ENCODE measurements at regions of chr2 and their contacts with region 1.

Region 1: GRCh38 chr2:54899576-54900200 is 150.6 kb downstream of the RTN4 start:
- DNase-seq: peak; percentile 67
- H3K4me3 ChIP-seq: no peak overlapping the region
- H3K27ac ChIP-seq: no peak overlapping the region
- H3K4me1 ChIP-seq: peaks cover 27% of the 10 kb centered on the region
- H3K27me3 ChIP-seq: no peaks in the 10 kb centered on the region
- CTCF ChIP-seq: peak; percentile 79

Region 2: GRCh38 chr2:54915101-54915500 is 15.4 kb after region 1 on chr2:
- CTCF ChIA-PET with region 1: no interaction called
- POLR2A ChIA-PET with region 1: no interaction called
- intact Hi-C with region 1: no loop called
- DNase-seq: no peak
- H3K4me3 ChIP-seq: no peak overlapping the region
- H3K27ac ChIP-seq: no peak overlapping the region
- H3K4me1 ChIP-seq: no peaks in the 10 kb centered on the region
- H3K27me3 ChIP-seq: no peaks in the 10 kb centered on the region
- CTCF ChIP-seq: no peak

Region 3: DNA sequence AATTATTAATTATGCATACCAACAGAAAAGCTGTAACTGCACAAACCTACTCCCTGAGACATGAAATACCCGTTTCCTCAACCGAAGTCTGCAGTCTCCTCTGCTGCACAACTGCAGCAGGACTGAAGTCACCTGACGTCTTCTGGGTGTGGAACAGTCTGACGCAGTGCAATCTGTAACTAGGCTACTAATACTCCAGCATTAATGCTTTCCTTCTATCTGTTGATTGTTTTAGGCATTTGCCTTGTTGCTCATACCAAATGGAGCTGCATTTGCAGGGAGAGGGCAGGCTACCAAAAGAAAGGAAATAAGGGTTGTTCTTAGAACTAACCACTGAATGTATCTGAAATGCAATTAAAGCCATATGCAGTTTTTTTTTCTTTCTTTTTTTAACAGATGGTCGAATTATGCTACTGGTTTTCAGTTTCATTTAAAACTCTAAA is 110.5 kb after region 1 on chr2:
- CTCF ChIA-PET with region 1: interaction called, 11 read pairs
- POLR2A ChIA-PET with region 1: no interaction called
- intact Hi-C with region 1: loop called (anchors 2 kb)
- DNase-seq: peak; percentile 79
- H3K4me3 ChIP-seq: peak overlapping the region; percentile 38
- H3K27ac ChIP-seq: peak overlapping the region; percentile 20
- H3K4me1 ChIP-seq: peaks cover 94% of the 10 kb centered on the region
- H3K27me3 ChIP-seq: no peaks in the 10 kb centered on the region
- CTCF ChIP-seq: no peak

Region 4: DNA sequence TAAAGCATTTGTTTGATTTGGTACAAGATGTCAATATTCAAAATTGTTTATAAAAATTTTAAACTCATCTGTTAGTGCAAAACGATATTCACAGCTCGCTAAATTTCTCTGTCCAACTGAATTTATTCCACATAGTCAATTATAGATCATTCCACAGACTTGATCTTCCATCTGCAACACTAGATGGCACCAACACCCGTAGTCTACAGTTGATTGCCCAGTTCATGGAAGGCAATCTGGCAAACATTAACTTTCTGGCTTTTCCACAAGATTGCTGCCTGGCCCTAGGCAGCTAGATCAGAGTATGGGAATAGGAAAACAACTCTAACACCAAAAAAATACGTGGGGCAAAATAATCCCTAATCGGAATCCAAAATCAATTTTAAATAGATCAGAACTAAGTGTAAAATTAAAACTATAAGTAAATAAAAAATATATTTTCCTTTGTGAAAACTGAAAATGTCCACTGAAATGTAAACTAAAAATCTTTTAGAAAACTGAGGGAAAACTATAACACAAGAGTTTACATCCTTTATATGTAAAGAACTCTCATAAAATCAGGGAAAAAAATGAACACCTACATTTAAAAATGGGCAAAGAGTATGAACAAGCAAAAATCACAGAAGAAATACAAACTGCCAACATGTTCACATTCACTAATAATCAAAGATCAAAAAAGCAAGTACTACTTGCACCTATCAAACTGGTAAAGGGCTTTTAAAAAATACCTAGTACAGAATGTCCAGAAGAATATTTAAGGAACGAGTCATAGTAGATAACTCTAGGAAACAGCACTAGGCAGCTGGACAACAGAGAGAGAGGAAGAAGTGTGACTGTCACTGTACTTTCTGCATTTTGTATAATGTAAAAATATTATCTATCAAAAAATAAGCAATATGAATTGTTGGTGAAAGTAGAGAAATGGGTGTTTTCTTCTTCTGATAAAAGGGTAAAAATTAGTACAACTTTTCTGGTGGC is 115.6 kb after region 1 on chr2:
- CTCF ChIA-PET with region 1: interaction called, 11 read pairs
- POLR2A ChIA-PET with region 1: no interaction called
- intact Hi-C with region 1: loop called (anchors 2 kb)
- DNase-seq: peak; percentile 83
- H3K4me3 ChIP-seq: no peak overlapping the region
- H3K27ac ChIP-seq: no peak overlapping the region
- H3K4me1 ChIP-seq: peaks cover 47% of the 10 kb centered on the region
- H3K27me3 ChIP-seq: no peaks in the 10 kb centered on the region
- CTCF ChIP-seq: peak; percentile 82

Region 5: DNA sequence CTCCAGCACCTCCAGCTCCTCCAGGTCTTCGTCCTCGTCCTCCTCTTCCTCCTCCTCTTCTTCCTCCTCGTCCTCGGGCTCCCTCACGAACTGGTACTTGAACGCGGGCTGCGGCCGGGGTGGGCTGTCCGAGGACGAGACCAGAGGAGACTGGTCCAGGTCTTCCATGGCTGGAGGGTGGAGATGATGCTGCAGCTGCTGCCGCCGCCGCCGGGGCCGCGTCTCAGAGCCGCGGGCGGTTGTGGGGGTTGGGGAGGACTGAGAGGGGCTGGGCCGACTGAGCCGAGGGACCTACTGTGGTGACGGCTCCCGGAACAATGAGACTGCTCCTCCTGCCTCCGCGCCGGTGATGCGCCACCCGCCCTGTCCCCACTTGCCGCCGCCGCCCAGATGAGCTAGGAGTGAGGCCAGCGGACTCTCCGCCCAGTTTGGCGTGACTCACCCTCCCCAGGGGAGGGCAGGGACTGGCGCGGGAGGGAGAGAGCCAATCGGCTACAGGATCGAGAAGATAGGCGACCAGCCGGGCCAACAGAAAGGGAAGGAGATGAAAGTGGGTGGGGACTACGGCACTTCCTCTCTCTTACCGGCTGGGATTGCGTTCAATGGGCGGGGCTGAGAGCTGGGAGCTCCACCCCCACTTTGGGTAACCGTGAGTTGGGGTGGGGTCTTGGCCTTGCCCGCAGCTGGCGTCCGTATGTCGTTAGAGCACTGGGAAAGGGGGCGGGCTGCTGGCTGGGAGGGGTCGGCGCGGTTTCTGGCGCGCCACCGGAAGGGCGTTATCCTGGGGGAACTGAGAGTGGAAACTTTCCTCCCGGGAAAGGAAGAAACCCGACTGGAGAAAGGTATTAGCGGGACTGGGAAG is 150.7 kb after region 1 on chr2 and contains the start of gene RTN4:
- CTCF ChIA-PET with region 1: interaction called, 3 read pairs
- POLR2A ChIA-PET with region 1: no interaction called
- intact Hi-C with region 1: loop called (anchors 5 kb)
- DNase-seq: peak; percentile 100
- H3K4me3 ChIP-seq: peak within 1 kb of the TSS; percentile 95
- H3K27ac ChIP-seq: peak within 1 kb of the TSS; percentile 93
- H3K4me1 ChIP-seq: peaks cover 35% of the 10 kb centered on the region
- H3K27me3 ChIP-seq: no peaks in the 10 kb centered on the region
- CTCF ChIP-seq: no peak
- total RNA-seq, gene RTN4: 244 and 275 TPM in 2 replicates

Region 6: GRCh38 chr2:55168221-55169154 is 268.8 kb after region 1 on chr2:
- CTCF ChIA-PET with region 1: interaction called, 17 read pairs
- POLR2A ChIA-PET with region 1: interaction called, 3 read pairs
- intact Hi-C with region 1: no loop called
- DNase-seq: peak; percentile 76
- H3K4me3 ChIP-seq: no peak overlapping the region
- H3K27ac ChIP-seq: peak overlapping the region; percentile 26
- H3K4me1 ChIP-seq: peaks cover 8% of the 10 kb centered on the region
- H3K27me3 ChIP-seq: no peaks in the 10 kb centered on the region
- CTCF ChIP-seq: peak; percentile 80

Region 7: DNA sequence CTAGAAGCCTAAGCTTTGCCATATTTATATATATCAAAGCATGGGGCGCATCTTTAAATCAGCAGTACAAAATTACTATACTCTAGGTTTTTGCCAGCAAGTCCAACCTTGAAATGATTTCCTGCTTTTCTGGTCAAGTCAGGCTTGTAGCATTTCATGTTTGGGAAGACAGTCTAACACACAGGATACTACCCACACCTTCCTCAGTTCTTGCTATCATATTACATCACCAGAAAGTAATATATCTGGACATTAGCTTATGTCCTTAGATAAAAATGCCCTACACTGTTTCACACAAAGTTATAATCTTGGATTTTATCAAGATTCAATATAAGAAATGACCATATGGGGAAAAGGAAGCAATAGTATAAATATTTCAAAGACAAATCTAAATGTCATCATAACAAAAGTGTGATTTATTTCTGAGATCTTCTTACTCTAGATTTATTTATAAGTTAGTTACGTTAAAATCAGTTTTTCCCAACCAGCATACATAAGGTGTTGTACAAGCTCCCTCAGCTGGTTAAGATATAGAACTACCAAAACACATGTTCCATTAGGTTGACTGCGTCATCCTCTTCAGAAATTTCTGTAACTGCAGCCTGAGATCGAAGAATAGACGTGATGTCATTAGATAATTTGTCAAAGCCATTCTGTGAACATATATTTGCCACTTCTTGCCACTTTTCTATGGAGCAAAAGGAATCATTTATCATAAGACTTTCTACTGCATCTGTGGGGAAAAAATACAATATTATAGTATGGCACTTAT is 275.8 kb after region 1 on chr2:
- CTCF ChIA-PET with region 1: interaction called, 17 read pairs
- POLR2A ChIA-PET with region 1: no interaction called
- intact Hi-C with region 1: loop called (anchors 2 kb)
- DNase-seq: peak; percentile 75
- H3K4me3 ChIP-seq: no peak overlapping the region
- H3K27ac ChIP-seq: no peak overlapping the region
- H3K4me1 ChIP-seq: peaks cover 16% of the 10 kb centered on the region
- H3K27me3 ChIP-seq: no peaks in the 10 kb centered on the region
- CTCF ChIP-seq: peak; percentile 75